Activated CD4-positive, alpha-beta T cell treated with anti-CD3 and anti-CD28 coated beads for 36 hours (primary cell): ENCODE measurements at regions of chr15 and their contacts with region 1.

Region 1: GRCh38 chr15:100341662-100342560 is at the start of gene ADAMTS17:
- DNase-seq: peak; percentile 96
- ATAC-seq: peak; percentile 99
- H3K4me3 Mint-ChIP-seq: peak within 1 kb of the TSS; percentile 54
- H3K27ac Mint-ChIP-seq: no peak within 1 kb of the TSS
- H3K4me1 Mint-ChIP-seq: peaks cover 12% of the 10 kb centered on the region
- H3K27me3 Mint-ChIP-seq: peaks cover 2% of the 10 kb centered on the region
- total RNA-seq, gene ADAMTS17: 0.49 to 0.57 TPM

Region 2: DNA sequence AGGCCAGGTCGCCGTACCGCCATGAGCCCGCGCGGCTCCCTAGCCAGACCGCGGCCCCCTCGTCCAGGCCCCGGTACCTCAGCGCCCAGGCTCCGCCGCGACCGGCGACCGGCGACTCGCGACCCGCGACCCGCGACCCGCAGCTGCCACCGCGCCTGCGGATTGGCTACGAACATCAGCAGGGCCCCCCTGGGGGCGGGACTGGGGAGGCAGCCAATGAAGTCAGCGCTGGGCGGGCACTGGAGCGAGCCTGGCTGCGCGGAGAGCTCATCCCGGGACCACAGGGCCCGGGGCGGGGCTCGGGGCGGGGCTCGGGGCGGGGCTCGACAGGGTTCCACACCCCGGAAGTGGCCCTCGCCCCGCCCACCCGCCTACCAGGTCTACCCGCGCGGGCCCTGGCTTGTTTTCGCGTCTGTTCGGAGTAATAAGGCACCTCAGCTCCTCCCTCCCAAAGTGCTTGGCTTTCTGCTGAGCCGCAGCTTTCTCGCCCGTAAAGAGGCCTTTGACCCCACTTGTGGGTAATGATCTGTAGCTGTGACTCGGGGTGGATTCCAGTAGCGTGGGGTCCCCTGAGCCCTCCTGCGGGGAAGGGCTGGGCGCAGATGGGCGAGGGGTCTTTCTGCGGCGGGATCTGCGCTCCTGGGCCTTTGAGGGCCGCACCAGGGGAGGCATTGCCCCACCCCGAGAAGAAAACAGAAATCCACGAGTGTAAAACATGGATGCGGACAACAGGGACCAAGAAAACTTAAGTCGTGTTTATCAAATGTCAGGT is 608.5 kb before region 1 on chr15 and contains the start of gene LYSMD4:
- CTCF ChIA-PET with region 1: no interaction called
- POLR2A ChIA-PET with region 1: no interaction called
- intact Hi-C with region 1: loop called in 1 of 2 experiments (anchors 5 kb)
- DNase-seq: peak; percentile 100
- ATAC-seq: peak; percentile 99
- H3K4me3 Mint-ChIP-seq: peak within 1 kb of the TSS; percentile 71
- H3K27ac Mint-ChIP-seq: peak within 1 kb of the TSS; percentile 91
- H3K4me1 Mint-ChIP-seq: peaks cover 23% of the 10 kb centered on the region
- H3K27me3 Mint-ChIP-seq: no peaks in the 10 kb centered on the region
- total RNA-seq, gene LYSMD4: 4.7 to 5.3 TPM

Region 3: GRCh38 chr15:100330629-100331215 is 11.2 kb before region 1 on chr15:
- CTCF ChIA-PET with region 1: interaction called, 177 read pairs
- POLR2A ChIA-PET with region 1: no interaction called
- intact Hi-C with region 1: no loop called
- DNase-seq: peak; percentile 39
- ATAC-seq: peak; percentile 74
- H3K4me3 Mint-ChIP-seq: no peak overlapping the region
- H3K27ac Mint-ChIP-seq: peak overlapping the region; percentile 45
- H3K4me1 Mint-ChIP-seq: peaks cover 62% of the 10 kb centered on the region
- H3K27me3 Mint-ChIP-seq: peaks cover 1% of the 10 kb centered on the region

Region 4: GRCh38 chr15:100596792-100597191 is 254.9 kb after region 1 on chr15:
- CTCF ChIA-PET with region 1: interaction called, 3 read pairs
- POLR2A ChIA-PET with region 1: no interaction called
- intact Hi-C with region 1: loop called (anchors 1 to 2 kb)
- DNase-seq: peak; percentile 96
- ATAC-seq: peak; percentile 82
- H3K4me3 Mint-ChIP-seq: peak overlapping the region; percentile 74
- H3K27ac Mint-ChIP-seq: peak overlapping the region; percentile 98
- H3K4me1 Mint-ChIP-seq: peaks cover 74% of the 10 kb centered on the region
- H3K27me3 Mint-ChIP-seq: no peaks in the 10 kb centered on the region

Region 5: DNA sequence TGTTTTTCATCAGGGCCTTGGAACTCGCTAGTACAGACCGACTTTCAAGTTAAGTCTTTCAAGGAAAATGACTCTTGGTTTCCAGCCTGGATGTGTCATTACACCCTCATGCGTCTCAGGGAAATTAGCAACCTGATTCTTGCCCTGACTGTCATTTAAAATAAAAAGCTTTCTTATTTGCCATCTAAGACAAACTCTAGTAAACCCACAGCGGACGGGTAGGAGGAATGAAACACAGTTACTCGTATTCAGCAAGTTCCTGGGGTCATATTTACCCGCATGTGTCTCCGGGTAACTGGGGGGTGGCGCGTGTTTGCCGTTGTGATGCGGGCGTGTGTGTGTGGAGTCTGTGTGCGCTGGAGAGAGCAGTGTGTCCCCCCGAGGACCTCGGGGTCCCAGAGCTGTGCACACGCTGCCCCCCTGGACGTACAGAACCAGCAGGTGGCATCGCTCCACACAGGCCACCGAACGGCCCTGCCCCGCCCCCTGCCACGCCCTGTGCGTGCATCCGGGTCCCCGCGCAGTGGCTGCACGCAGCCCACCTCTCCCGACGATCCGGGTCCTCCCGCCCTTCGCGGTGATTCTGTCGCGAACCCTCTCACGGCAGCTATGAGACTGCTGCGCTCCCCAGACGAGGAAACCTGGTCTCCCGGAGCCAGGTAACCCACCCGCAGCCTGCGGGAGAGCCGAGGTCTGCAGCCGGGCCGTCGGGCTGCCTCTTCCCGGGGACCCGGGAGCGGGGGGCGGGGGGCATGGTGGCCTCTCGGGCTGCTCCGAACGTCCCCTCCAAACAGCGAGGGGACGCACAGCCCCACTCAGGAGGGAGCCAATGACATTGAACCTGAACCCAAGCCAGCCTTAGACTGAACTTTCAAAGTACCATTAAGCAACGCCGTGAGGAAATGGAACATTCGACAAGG is 507.6 kb after region 1 on chr15:
- CTCF ChIA-PET with region 1: no interaction called
- POLR2A ChIA-PET with region 1: no interaction called
- intact Hi-C with region 1: loop called in 1 of 2 experiments (anchors 1 kb)
- DNase-seq: peak; percentile 72
- ATAC-seq: peak; percentile 83
- H3K4me3 Mint-ChIP-seq: peak overlapping the region; percentile 71
- H3K27ac Mint-ChIP-seq: peak overlapping the region; percentile 68
- H3K4me1 Mint-ChIP-seq: peaks cover 5% of the 10 kb centered on the region
- H3K27me3 Mint-ChIP-seq: peaks cover 17% of the 10 kb centered on the region